ENCODE measurements at regions of chr4 and their contacts with region 1.

Region 1: DNA sequence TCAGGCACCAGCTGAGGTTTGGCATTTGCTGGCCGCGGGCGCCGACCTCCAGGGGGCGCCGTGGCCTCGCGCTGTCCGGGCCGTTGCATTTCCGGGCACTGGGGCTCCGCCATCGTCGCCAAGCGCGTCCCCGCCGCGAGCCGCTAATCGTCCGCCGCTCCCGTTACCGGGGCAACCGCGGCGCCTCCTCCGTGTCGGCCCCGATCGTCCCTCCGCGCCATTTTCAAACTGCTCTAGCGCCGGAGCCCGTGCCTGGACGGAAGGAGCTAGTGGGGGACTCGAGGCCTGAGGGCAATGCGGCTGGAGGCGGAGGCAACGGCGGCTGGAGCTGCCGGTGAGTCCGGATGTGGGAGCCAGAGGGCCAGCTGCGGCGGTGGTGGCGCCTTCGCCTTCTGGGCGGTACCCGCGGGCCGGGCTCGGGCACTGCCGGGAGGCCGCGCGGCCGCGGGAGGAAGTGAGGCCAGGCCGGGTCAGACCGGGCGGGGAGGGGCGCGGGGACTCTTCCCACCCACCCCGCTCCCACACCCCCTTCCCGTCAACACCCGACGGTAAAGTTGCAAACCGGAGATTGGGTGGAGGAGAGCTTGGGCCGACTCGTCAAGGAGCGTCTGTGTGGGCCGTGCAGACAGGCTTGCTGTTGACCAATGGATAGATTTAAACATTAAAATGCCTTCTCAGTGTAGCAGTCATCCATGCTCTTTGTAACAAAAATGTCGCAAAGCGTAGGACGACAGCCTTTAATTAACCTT is at the start of gene CEP135:
- H3K4me3 Mint-ChIP-seq: peak within 1 kb of the TSS; percentile 85
- H3K27ac Mint-ChIP-seq: peak within 1 kb of the TSS; percentile 97
- H3K4me1 Mint-ChIP-seq: peaks cover 34% of the 10 kb centered on the region
- H3K27me3 Mint-ChIP-seq: no peaks in the 10 kb centered on the region

Region 2: GRCh38 chr4:55345980-55346850 is 602.7 kb before region 1 on chr4 and contains the start of gene SRD5A3:
- intact Hi-C with region 1: loop called (anchors 2 kb)
- H3K4me3 Mint-ChIP-seq: peak within 1 kb of the TSS; percentile 93
- H3K27ac Mint-ChIP-seq: peak within 1 kb of the TSS; percentile 93
- H3K4me1 Mint-ChIP-seq: peaks cover 16% of the 10 kb centered on the region
- H3K27me3 Mint-ChIP-seq: no peaks in the 10 kb centered on the region

Region 3: GRCh38 chr4:55853484-55854046 is 95.3 kb before region 1 on chr4 and contains the start of gene EXOC1:
- intact Hi-C with region 1: loop called (anchors 2 kb)
- H3K4me3 Mint-ChIP-seq: no peak within 1 kb of the TSS
- H3K27ac Mint-ChIP-seq: peak within 1 kb of the TSS; percentile 94
- H3K4me1 Mint-ChIP-seq: no peaks in the 10 kb centered on the region
- H3K27me3 Mint-ChIP-seq: peaks cover 8% of the 10 kb centered on the region

Region 4: DNA sequence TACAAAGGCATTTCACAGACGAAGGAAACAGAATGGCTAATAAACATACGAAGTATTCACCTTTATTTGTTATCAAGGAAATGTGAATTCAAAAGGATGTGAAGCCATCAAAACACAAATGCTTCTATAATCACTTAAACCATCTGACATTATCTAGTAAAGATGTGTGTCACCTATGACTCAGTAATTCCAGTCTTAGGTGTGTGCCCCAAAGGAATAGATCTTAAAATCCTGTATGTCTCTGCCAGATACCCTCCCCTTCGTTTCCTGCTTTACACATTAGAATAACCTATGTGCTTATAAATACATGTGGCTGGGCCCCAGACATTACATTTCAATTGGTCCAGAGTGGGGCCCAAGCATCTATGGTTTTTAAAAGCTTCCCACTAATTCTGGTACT is 41.9 kb before region 1 on chr4:
- intact Hi-C with region 1: loop called (anchors 5 kb)
- H3K4me3 Mint-ChIP-seq: no peak overlapping the region
- H3K27ac Mint-ChIP-seq: no peak overlapping the region
- H3K4me1 Mint-ChIP-seq: no peaks in the 10 kb centered on the region
- H3K27me3 Mint-ChIP-seq: no peaks in the 10 kb centered on the region

Region 5: GRCh38 chr4:56387023-56388001 is 438.4 kb after region 1 on chr4 and contains the start of gene AASDH:
- intact Hi-C with region 1: loop called (anchors 2 kb)
- H3K4me3 Mint-ChIP-seq: peak within 1 kb of the TSS; percentile 87
- H3K27ac Mint-ChIP-seq: peak within 1 kb of the TSS; percentile 99
- H3K4me1 Mint-ChIP-seq: peaks cover 14% of the 10 kb centered on the region
- H3K27me3 Mint-ChIP-seq: no peaks in the 10 kb centered on the region

Region 6: GRCh38 chr4:56467284-56468096 is 518.6 kb after region 1 on chr4 and contains the start of gene SRP72:
- intact Hi-C with region 1: loop called (anchors 10 kb)
- H3K4me3 Mint-ChIP-seq: peak within 1 kb of the TSS; percentile 94
- H3K27ac Mint-ChIP-seq: peak within 1 kb of the TSS; percentile 87
- H3K4me1 Mint-ChIP-seq: peaks cover 44% of the 10 kb centered on the region
- H3K27me3 Mint-ChIP-seq: no peaks in the 10 kb centered on the region

Region 7: GRCh38 chr4:56977321-56978012 is 1028.6 kb after region 1 on chr4 and contains the start of gene NOA1:
- intact Hi-C with region 1: loop called (anchors 5 kb)
- H3K4me3 Mint-ChIP-seq: peak within 1 kb of the TSS; percentile 93
- H3K27ac Mint-ChIP-seq: peak within 1 kb of the TSS; percentile 96
- H3K4me1 Mint-ChIP-seq: peaks cover 39% of the 10 kb centered on the region
- H3K27me3 Mint-ChIP-seq: no peaks in the 10 kb centered on the region

Measured in dendritic cell treated with granulocyte-macrophage colony-stimulating factor and Interleukin-4, amounts not matched to agents 40 ng/mL and 50 ng/mL, for 4 days (primary cell).